Cardiac septum (tissue), 1 donor: ENCODE measurements at regions of chr3 and their contacts with region 1.

Region 1: DNA sequence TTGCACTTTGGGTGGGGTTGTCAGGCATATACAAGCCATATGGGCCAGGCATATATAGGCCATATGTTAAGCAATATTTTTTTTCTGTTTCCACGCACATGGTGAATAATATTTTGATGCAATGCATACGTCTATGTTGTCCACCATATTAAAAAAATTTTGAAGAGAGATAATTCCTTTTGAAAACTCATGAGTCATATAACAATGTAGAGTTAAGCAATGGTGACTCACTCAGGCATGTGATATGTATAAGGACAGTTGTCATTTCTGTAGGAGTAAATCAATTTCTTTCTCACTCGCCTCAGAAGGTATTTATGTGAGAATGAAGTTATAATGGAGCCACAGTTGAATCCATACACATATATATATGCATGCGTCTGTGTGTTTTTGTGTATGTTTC is 272.6 kb downstream of the EPHA3 start:
- DNase-seq: no peak

Region 2: DNA sequence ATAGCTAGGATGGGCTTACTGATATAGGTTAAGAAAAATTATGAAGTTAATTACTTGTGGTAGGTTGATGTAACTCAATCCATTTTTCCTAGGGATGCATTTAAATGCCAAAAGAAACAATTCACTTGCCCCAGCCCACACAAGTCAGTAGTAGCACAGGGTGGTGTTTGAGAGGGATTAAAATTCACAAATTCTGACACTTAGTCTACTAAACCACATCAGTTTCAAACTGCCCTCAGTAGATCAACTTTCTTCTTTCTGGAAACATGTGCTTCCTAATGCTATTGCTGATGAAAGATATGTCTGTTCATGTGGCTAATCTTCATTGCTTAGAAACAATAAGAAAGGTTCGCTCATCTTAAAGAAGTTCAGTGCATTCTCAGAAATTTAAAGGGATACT is 111.9 kb before region 1 on chr3:
- intact Hi-C with region 1: no loop called
- DNase-seq: no peak

Region 3: DNA sequence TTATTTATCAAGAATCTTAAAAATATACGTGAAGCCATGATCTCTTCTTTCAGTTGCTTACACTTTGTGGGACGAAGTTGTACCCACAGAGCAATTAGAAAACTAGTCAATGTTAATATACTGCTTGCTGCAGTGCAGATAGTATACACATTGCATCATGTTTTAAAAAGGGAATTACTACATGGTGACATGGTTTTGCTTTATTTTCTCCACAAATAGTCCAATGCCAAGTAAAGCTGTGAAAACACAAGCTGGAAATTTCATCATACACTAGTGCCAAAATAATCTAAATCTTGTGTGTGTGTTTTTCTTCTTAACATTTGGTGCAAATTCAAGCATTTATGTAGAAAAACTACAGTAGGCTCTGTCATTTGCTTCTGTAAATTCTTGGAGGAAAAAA is 39.6 kb before region 1 on chr3:
- intact Hi-C with region 1: loop called (anchors 5 kb)
- DNase-seq: no peak